ENCODE measurements at regions of chr10 and their contacts with region 1.

Region 1: GRCh38 chr10:79268161-79268601 is 79.1 kb upstream of the PPIF start:
- DNase-seq: no peak
- H3K4me3 ChIP-seq: no peak overlapping the region
- H3K27ac ChIP-seq: peak overlapping the region; percentile 73 to 89
- H3K4me1 ChIP-seq: peaks cover 9 to 26% of the 10 kb centered on the region in 2 donors
- H3K27me3 ChIP-seq: no peaks in the 10 kb centered on the region
- CTCF ChIP-seq: no peak
- POLR2A ChIP-seq: no peak

Region 2: GRCh38 chr10:79224992-79225391 is 43.2 kb before region 1 on chr10:
- intact Hi-C with region 1: loop called (anchors 1 kb)
- DNase-seq: no peak
- H3K4me3 ChIP-seq: no peak overlapping the region
- H3K27ac ChIP-seq: no peak overlapping the region
- H3K4me1 ChIP-seq: peaks cover 13 to 41% of the 10 kb centered on the region in 2 donors
- H3K27me3 ChIP-seq: no peaks in the 10 kb centered on the region
- CTCF ChIP-seq: no peak
- POLR2A ChIP-seq: no peak